Body of pancreas (tissue), 4 donors: ENCODE measurements at regions of chr19 and their contacts with region 1.

Region 1: GRCh38 chr19:48596679-48597465 is 9.7 kb upstream of the SPACA4 start:
- DNase-seq: no peak
- ATAC-seq: no peak
- H3K4me3 ChIP-seq: no peak overlapping the region
- H3K27ac ChIP-seq: no peak overlapping the region
- H3K4me1 ChIP-seq: no peaks in the 10 kb centered on the region
- H3K27me3 ChIP-seq: no peaks in the 10 kb centered on the region
- CTCF ChIP-seq: no peak
- POLR2A ChIP-seq: no peak

Region 2: DNA sequence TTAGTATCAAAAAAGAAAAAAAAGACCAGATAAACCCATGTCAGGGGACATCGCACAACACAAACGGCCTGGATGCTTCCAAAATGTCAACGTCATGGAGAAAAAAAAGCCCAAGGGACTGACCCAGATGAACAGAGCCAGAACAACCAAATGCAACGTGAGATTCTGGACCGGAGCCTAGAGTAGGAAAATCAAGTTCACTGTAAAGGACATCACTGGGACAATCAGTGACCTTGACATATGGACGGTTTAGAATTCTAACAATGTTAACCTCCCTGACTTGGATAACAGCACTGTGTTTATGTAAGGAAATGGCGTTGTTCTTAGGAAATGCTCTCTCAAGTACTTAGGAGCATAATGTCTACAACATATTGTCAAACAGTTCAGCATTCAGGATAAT is 286.6 kb before region 1 on chr19:
- intact Hi-C with region 1: loop called (anchors 10 kb)
- DNase-seq: no peak
- ATAC-seq: peak; percentile 50
- H3K4me3 ChIP-seq: no peak overlapping the region
- H3K27ac ChIP-seq: no peak overlapping the region
- H3K4me1 ChIP-seq: no peaks in the 10 kb centered on the region
- H3K27me3 ChIP-seq: no peaks in the 10 kb centered on the region
- CTCF ChIP-seq: no peak
- POLR2A ChIP-seq: no peak

Region 3: GRCh38 chr19:48480558-48481500 is 116.0 kb before region 1 on chr19:
- intact Hi-C with region 1: no loop called
- DNase-seq: peak in 3 of 4 donors; percentile 45 to 59 (median 46)
- ATAC-seq: peak; percentile 64
- H3K4me3 ChIP-seq: peak overlapping the region; percentile 23 to 33
- H3K27ac ChIP-seq: peak overlapping the region in 3 of 4 donors; percentile 50 to 75 (median 71)
- H3K4me1 ChIP-seq: peaks cover 23% of the 10 kb centered on the region
- H3K27me3 ChIP-seq: no peaks in the 10 kb centered on the region
- CTCF ChIP-seq: no peak
- POLR2A ChIP-seq: peak in 2 of 3 donors; percentile 32